K562 (cell line): ENCODE measurements at regions of chr5 and their contacts with region 1.

Region 1: GRCh38 chr5:81751009-81751835 is at the start of gene SSBP2:
- DNase-seq: peak; percentile 94 to 99 (median 95)
- ATAC-seq: peak; percentile 84
- H3K4me3 ChIP-seq: peak within 1 kb of the TSS; percentile 73
- H3K27ac ChIP-seq: peak within 1 kb of the TSS; percentile 91
- H3K4me1 ChIP-seq: peaks cover 24 to 48% of the 10 kb centered on the region in 2 experiments
- H3K27me3 ChIP-seq: no peaks in the 10 kb centered on the region
- CTCF ChIP-seq: 0 out of 6 replicates have a peak, but pooled peaks of 1 of the 3 experiments have one; percentile 4
- EP300 ChIP-seq: peak; percentile 98
- POLR2A ChIP-seq: peak; percentile 78
- RAD21 ChIP-seq: peak; percentile 70 to 75
- polyA plus RNA-seq, gene SSBP2: 81.8 to 133 TPM

Region 2: DNA sequence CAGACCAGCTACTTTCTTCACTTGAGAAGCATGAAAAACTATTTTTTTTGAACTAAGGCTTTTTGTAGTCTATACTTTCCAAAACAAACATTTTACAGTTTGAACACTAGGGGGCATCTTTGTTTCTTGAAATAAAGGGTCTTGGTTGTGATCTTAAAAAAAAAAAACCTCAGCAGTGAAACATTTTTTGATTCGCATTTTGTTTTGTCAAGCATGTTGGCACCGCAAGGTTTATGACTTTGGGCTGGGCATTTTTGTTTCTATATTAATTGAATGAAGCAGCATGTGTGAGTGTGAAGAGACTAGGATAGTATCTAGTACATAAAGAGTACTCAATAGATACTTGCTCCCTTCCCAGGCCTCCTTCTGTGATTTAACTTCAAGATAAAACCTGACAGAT is 325.7 kb before region 1 on chr5:
- CTCF ChIA-PET with region 1: no interaction called
- POLR2A ChIA-PET with region 1: no interaction called
- in situ Hi-C with region 1: no loop called
- intact Hi-C with region 1: loop called (anchors 5 kb)
- DNase-seq: peak; percentile 16 to 28 (median 19)
- ATAC-seq: peak; percentile 78
- H3K4me3 ChIP-seq: no peak overlapping the region
- H3K27ac ChIP-seq: no peak overlapping the region
- H3K4me1 ChIP-seq: peaks cover 0 to 3% of the 10 kb centered on the region in 2 experiments; a peak in 3 of 5 replicates
- H3K27me3 ChIP-seq: no peaks in the 10 kb centered on the region
- CTCF ChIP-seq: peak; percentile 46 to 66 (median 47); a peak in 4 of 6 replicates
- EP300 ChIP-seq: no peak
- POLR2A ChIP-seq: no peak
- RAD21 ChIP-seq: peak; percentile 66 to 70

Region 3: DNA sequence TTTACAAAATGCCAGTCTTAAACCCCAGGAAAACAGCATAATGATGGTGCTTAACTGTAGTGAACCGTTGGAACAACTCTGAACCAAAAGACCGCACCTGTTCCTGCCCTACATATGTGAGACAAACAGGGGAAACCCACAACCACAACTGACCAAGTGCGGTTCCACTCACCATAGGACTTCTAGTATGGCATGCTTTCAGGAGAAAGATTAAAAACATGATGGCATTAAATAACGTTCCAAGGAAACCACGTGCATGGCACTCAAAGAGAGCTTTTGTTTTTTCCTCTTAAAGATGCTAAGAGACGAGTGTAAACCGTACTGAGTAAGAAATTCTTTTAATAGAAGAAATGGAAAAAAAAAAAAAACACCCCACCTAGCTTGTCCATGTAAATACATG is 120.1 kb before region 1 on chr5:
- CTCF ChIA-PET with region 1: no interaction called
- POLR2A ChIA-PET with region 1: no interaction called
- in situ Hi-C with region 1: no loop called
- intact Hi-C with region 1: loop called (anchors 10 kb)
- DNase-seq: no peak
- ATAC-seq: no peak
- H3K4me3 ChIP-seq: no peak overlapping the region
- H3K27ac ChIP-seq: no peak overlapping the region
- H3K4me1 ChIP-seq: no peaks in the 10 kb centered on the region
- H3K27me3 ChIP-seq: no peaks in the 10 kb centered on the region
- CTCF ChIP-seq: no peak
- EP300 ChIP-seq: no peak
- POLR2A ChIP-seq: no peak
- RAD21 ChIP-seq: no peak

Region 4: GRCh38 chr5:81838307-81838906 is 87.2 kb after region 1 on chr5:
- CTCF ChIA-PET with region 1: no interaction called
- POLR2A ChIA-PET with region 1: interaction called, 9 read pairs
- in situ Hi-C with region 1: no loop called
- intact Hi-C with region 1: loop called (anchors 1 kb)
- DNase-seq: peak; percentile 36 to 78 (median 52)
- ATAC-seq: peak; percentile 97
- H3K4me3 ChIP-seq: no peak overlapping the region
- H3K27ac ChIP-seq: 0 out of 3 replicates have a peak overlapping the region, but pooled peaks have one; percentile 8
- H3K4me1 ChIP-seq: peaks cover 0 to 9% of the 10 kb centered on the region in 2 experiments; a peak in 3 of 5 replicates
- H3K27me3 ChIP-seq: no peaks in the 10 kb centered on the region
- CTCF ChIP-seq: peak; percentile 70 to 83 (median 79)
- EP300 ChIP-seq: no peak
- POLR2A ChIP-seq: no peak
- RAD21 ChIP-seq: peak; percentile 80 to 89

Region 5: GRCh38 chr5:81950996-81951395 is 199.8 kb after region 1 on chr5:
- CTCF ChIA-PET with region 1: no interaction called
- POLR2A ChIA-PET with region 1: no interaction called
- in situ Hi-C with region 1: no loop called
- intact Hi-C with region 1: loop called (anchors 5 kb)
- DNase-seq: no peak
- ATAC-seq: no peak; the same call in 2 of the 3 replicates
- H3K4me3 ChIP-seq: no peak overlapping the region
- H3K27ac ChIP-seq: no peak overlapping the region
- H3K4me1 ChIP-seq: peaks cover 2 to 13% of the 10 kb centered on the region in 2 experiments; a peak in 3 of 5 replicates
- H3K27me3 ChIP-seq: no peaks in the 10 kb centered on the region
- CTCF ChIP-seq: no peak
- EP300 ChIP-seq: no peak
- POLR2A ChIP-seq: no peak
- RAD21 ChIP-seq: no peak

Region 6: DNA sequence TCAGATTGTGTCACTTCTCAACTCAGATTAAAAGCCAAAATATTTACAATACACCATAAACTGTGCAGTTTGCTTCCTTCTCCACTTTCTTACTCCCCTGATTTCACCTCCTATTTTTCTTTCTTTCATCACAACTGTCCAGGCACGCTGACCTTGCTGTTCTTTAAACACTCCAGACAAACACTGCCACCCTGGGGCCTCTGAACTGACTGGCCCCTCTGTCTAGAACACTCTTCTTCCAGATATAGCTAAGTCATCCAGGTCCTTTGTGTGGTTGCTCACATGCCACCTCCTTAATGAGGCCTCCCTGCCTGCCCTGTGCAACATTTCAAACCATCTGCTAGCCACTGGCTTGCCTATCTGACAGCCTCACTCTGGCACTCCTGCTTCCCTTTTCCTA is 267.2 kb after region 1 on chr5:
- CTCF ChIA-PET with region 1: no interaction called
- POLR2A ChIA-PET with region 1: no interaction called
- in situ Hi-C with region 1: no loop called
- intact Hi-C with region 1: loop called (anchors 5 kb)
- DNase-seq: peak in 2 of 4 experiments; percentile 32 to 59
- ATAC-seq: peak; percentile 93
- H3K4me3 ChIP-seq: no peak overlapping the region
- H3K27ac ChIP-seq: 0 out of 3 replicates have a peak overlapping the region, but pooled peaks have one; percentile 5
- H3K4me1 ChIP-seq: peaks cover 10 to 11% of the 10 kb centered on the region in 2 experiments; a peak in 4 of 5 replicates
- H3K27me3 ChIP-seq: no peaks in the 10 kb centered on the region
- CTCF ChIP-seq: peak in 2 of 3 experiments; percentile 14 to 41; a peak in 3 of 6 replicates
- EP300 ChIP-seq: peak; percentile 8; the same call in 1 of the 2 replicates
- POLR2A ChIP-seq: no peak
- RAD21 ChIP-seq: peak; percentile 42 to 47